H1 (cell line): ENCODE measurements at regions of chr19 and their contacts with region 1.

Region 1: GRCh38 chr19:23075031-23075760 is 41.6 kb upstream of the ZNF730 start:
- DNase-seq: peak; percentile 92 to 95
- H3K4me3 ChIP-seq: peak overlapping the region; percentile 84 to 99 (median 97)
- H3K27ac ChIP-seq: peak overlapping the region; percentile 100
- H3K4me1 ChIP-seq: peaks cover 0 to 2% (median 0%) of the 10 kb centered on the region in 4 experiments; a peak in 1 of 7 replicates
- H3K27me3 ChIP-seq: no peaks in the 10 kb centered on the region
- CTCF ChIP-seq: no peak
- EP300 ChIP-seq: no peak; a peak in 1 of 3 replicates
- POLR2A ChIP-seq: peak; percentile 94 to 99
- RAD21 ChIP-seq: peak in 1 of 2 experiments; percentile 7; a peak in 1 of 4 replicates

Region 2: DNA sequence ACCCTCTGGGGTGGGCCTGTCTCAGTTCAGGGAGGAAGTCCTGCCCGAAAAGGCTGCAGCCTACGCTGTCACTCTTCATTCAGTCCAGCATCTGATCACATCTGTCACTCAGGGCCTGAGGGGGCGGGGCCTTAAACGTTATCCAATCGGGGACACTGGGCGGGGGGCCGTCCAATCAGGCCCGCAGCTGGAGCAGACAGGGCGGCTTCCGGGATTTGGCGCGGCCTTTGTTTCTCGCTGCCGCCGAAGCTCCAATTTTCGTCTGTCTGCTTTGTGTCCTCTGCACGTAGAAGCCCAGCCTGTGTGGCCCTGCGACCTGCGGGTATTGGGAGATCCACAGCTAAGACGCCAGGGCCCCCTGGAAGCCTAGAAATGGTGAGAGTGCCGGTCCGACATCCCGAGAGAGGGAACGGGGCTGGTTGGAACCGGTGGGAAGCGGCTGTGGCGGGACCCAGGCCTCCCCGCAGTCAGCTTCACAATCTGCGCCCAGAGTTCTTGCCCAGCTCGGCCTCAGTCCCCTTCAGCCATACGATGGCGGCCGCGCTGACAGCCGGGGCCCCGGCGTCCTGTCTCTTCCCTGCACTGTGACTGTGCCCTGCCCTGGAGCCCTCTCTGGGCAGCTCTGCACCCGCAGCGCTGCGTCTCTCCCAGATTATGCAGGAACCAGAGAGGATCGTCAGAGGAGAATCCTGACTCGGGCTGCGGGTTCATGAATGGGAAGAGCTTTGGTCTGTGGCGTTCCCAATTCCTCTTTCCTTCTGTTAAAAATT is 41.8 kb after region 1 on chr19 and contains the start of gene ZNF730:
- CTCF ChIA-PET with region 1: no interaction called
- POLR2A ChIA-PET with region 1: interaction called, 17 read pairs
- DNase-seq: peak; percentile 66 to 91
- H3K4me3 ChIP-seq: peak within 1 kb of the TSS; percentile 50 to 81 (median 68)
- H3K27ac ChIP-seq: peak within 1 kb of the TSS; percentile 98
- H3K4me1 ChIP-seq: no peaks in the 10 kb centered on the region
- H3K27me3 ChIP-seq: no peaks in the 10 kb centered on the region
- CTCF ChIP-seq: no peak
- EP300 ChIP-seq: 0 out of 3 replicates have a peak, but pooled peaks of 1 of the 2 experiments have one; percentile 4
- POLR2A ChIP-seq: peak; percentile 56 to 96
- RAD21 ChIP-seq: no peak
- total RNA-seq, gene ZNF730: 24.7 and 29.4 TPM in 2 replicates

Region 3: GRCh38 chr19:23249911-23250649 is 174.9 kb after region 1 on chr19 and contains the start of gene ZNF724:
- CTCF ChIA-PET with region 1: no interaction called
- POLR2A ChIA-PET with region 1: interaction called, 24 read pairs
- DNase-seq: peak; percentile 89 to 94
- H3K4me3 ChIP-seq: peak within 1 kb of the TSS; percentile 62 to 98 (median 92)
- H3K27ac ChIP-seq: peak within 1 kb of the TSS; percentile 97
- H3K4me1 ChIP-seq: peaks cover 0 to 3% (median 0%) of the 10 kb centered on the region in 4 experiments; a peak in 2 of 7 replicates
- H3K27me3 ChIP-seq: no peaks in the 10 kb centered on the region
- CTCF ChIP-seq: no peak
- EP300 ChIP-seq: no peak
- POLR2A ChIP-seq: peak; percentile 79 to 99
- RAD21 ChIP-seq: no peak; a peak in 1 of 4 replicates
- total RNA-seq, gene ZNF724: 62.3 and 67.2 TPM in 2 replicates

Region 4: GRCh38 chr19:23758187-23759074 is 683.2 kb after region 1 on chr19 and contains the start of gene ZNF681:
- CTCF ChIA-PET with region 1: no interaction called
- POLR2A ChIA-PET with region 1: interaction called, 10 read pairs
- DNase-seq: peak; percentile 46 to 57
- H3K4me3 ChIP-seq: peak within 1 kb of the TSS; percentile 61 to 79 (median 70)
- H3K27ac ChIP-seq: peak within 1 kb of the TSS; percentile 60; the same call in 1 of the 2 replicates
- H3K4me1 ChIP-seq: no peaks in the 10 kb centered on the region; a peak in 1 of 7 replicates
- H3K27me3 ChIP-seq: no peaks in the 10 kb centered on the region; a peak in 1 of 7 replicates
- CTCF ChIP-seq: no peak
- EP300 ChIP-seq: no peak
- POLR2A ChIP-seq: peak; percentile 58 to 81
- RAD21 ChIP-seq: no peak
- total RNA-seq, gene ZNF681: 6.8 and 7.9 TPM in 2 replicates